ENCODE measurements at regions of chr14 and their contacts with region 1.

Region 1: DNA sequence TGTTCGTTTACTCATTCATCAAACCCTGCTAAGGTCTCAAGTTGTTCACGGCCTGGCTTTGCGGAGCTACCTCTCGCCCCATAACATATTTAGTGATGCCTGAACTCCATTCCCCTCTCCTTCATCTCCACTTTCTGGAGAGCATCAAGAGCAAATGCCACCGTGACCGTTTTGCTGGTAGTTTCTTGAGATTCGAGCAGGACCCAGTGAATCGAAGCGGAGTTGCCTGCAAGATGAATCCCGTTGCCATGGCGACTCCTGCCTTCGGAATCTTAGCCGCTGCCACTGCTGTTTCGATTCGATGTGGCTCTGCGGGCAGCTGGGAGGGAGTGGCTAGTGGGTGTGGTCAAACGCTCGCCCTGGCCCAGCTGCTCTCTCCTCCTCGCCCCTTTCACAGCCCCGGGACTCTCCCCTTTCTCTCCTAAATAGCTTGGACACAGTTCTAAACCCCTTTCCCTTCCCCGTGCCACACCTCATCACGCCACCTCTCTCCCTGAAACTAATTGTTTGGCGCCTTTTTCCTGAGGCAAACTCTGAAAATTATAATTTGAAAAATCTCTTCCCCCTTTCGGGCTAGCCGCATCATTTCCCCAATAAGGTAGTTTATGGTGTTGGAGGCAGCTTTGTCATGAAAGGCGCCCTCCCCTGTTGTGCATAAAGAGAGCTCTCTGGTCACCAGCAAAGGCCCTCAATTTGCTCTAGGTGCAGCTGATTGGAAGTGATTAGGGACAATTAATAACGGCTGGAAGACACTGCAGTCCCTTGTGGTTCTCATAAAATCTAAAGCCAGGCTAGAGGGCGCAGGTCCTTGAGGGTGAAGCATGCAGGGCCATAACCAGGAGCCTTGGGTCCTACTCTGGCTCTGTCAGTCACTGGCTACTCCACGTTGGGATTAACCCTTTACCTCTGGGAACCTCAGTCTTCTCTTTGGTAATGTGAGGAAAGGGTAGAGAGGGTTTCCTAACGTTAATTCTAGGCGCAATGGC is 1.6 kb downstream of the DAAM1 start:
- DNase-seq: peak; percentile 83 to 91 (median 85)
- ATAC-seq: peak in 3 of 4 donors; percentile 31 to 36 (median 31)
- H3K4me3 ChIP-seq: peak overlapping the region; percentile 70 to 95 (median 86)
- H3K27ac ChIP-seq: peak overlapping the region; percentile 87 to 97 (median 94)
- H3K4me1 ChIP-seq: peaks cover 0 to 58% (median 45%) of the 10 kb centered on the region in 12 donors
- H3K27me3 ChIP-seq: peaks cover 0 to 3% (median 0%) of the 10 kb centered on the region in 9 donors
- CTCF ChIP-seq: peak in 3 of 12 donors; percentile 7 to 33 (median 26)
- POLR2A ChIP-seq: no peak

Region 2: GRCh38 chr14:58659846-58660245 is 530.2 kb before region 1 on chr14:
- intact Hi-C with region 1: no loop called
- DNase-seq: peak; percentile 57 to 68 (median 64)
- ATAC-seq: peak in 3 of 4 donors; percentile 73 to 81 (median 77)
- H3K4me3 ChIP-seq: no peak overlapping the region
- H3K27ac ChIP-seq: peak overlapping the region in 4 of 12 donors; percentile 8 to 41 (median 30)
- H3K4me1 ChIP-seq: peaks cover 0 to 26% (median 4%) of the 10 kb centered on the region in 12 donors
- H3K27me3 ChIP-seq: no peaks in the 10 kb centered on the region
- CTCF ChIP-seq: no peak
- POLR2A ChIP-seq: no peak

Region 3: GRCh38 chr14:58749066-58749669 is 440.9 kb before region 1 on chr14:
- intact Hi-C with region 1: no loop called
- DNase-seq: no peak
- ATAC-seq: peak in 3 of 4 donors; percentile 38 to 49 (median 43)
- H3K4me3 ChIP-seq: no peak overlapping the region
- H3K27ac ChIP-seq: peak overlapping the region in 1 of 12 donors; percentile 69
- H3K4me1 ChIP-seq: peaks cover 0 to 70% (median 9%) of the 10 kb centered on the region in 12 donors
- H3K27me3 ChIP-seq: no peaks in the 10 kb centered on the region
- CTCF ChIP-seq: no peak
- POLR2A ChIP-seq: no peak

Region 4: DNA sequence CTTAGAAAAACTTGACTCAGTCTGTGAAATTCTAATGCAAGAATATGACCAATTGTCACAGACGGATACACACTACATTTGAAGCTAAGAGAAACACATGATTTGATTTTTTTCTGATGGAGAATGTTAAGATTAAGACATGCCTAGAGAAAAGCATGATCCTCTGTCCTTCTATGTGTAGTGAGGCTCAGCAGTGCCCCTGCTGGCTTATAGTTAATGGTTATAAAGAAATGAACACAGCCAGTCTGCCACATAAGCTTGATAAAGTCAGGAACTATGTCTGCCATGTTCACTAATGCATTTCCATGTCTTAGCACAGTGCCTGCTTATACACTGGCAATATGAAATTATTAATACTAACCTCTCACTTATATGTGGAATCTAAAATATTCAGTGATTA is 169.7 kb before region 1 on chr14:
- intact Hi-C with region 1: no loop called
- DNase-seq: no peak
- ATAC-seq: no peak
- H3K4me3 ChIP-seq: no peak overlapping the region
- H3K27ac ChIP-seq: no peak overlapping the region
- H3K4me1 ChIP-seq: no peaks in the 10 kb centered on the region
- H3K27me3 ChIP-seq: no peaks in the 10 kb centered on the region
- CTCF ChIP-seq: peak in 10 of 12 donors; percentile 9 to 49 (median 33)
- POLR2A ChIP-seq: no peak

Region 5: GRCh38 chr14:59215325-59216181 is 25.5 kb after region 1 on chr14:
- intact Hi-C with region 1: loop called in 2 of 10 experiments (anchors 1 to 2 kb)
- DNase-seq: peak; percentile 68 to 88 (median 79)
- ATAC-seq: peak; percentile 73 to 97 (median 92)
- H3K4me3 ChIP-seq: peak overlapping the region in 1 of 12 donors; percentile 5
- H3K27ac ChIP-seq: peak overlapping the region; percentile 29 to 78 (median 50)
- H3K4me1 ChIP-seq: peaks cover 26 to 100% (median 79%) of the 10 kb centered on the region in 12 donors
- H3K27me3 ChIP-seq: no peaks in the 10 kb centered on the region
- CTCF ChIP-seq: no peak
- POLR2A ChIP-seq: no peak

Region 6: GRCh38 chr14:59301354-59301753 is 111.3 kb after region 1 on chr14:
- intact Hi-C with region 1: loop called in 1 of 10 experiments (anchors 10 kb)
- DNase-seq: peak in 1 of 5 donors; percentile 43
- ATAC-seq: peak in 3 of 4 donors; percentile 42 to 62 (median 54)
- H3K4me3 ChIP-seq: no peak overlapping the region
- H3K27ac ChIP-seq: no peak overlapping the region
- H3K4me1 ChIP-seq: peaks cover 3 to 83% (median 47%) of the 10 kb centered on the region in 12 donors
- H3K27me3 ChIP-seq: no peaks in the 10 kb centered on the region
- CTCF ChIP-seq: no peak
- POLR2A ChIP-seq: no peak

Region 7: DNA sequence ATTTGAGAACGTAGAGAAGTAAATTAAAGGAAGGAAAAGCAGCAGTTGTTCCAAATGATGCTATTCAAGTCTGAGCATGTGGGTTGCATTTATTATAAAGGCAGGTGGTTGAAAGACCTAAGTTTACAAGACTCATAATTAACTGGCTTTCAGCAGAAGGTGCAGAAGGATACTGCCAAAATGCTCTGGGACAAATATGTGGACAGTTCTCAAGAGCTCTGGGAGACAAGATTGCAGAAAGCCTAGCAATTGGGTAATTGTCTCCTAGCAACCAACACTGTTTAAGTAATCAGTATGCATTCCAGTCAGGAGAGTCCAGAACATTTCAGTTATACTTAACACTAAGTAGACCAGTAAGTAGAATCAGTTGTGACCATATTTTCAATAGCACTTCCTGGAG is 143.6 kb after region 1 on chr14:
- intact Hi-C with region 1: loop called in 5 of 10 experiments (anchors 5 to 10 kb)
- DNase-seq: peak in 2 of 5 donors; percentile 39 to 56
- ATAC-seq: peak; percentile 91 to 93 (median 92)
- H3K4me3 ChIP-seq: peak overlapping the region in 4 of 12 donors; percentile 3 to 11 (median 4)
- H3K27ac ChIP-seq: peak overlapping the region; percentile 72 to 92 (median 82)
- H3K4me1 ChIP-seq: peaks cover 9 to 87% (median 68%) of the 10 kb centered on the region in 12 donors
- H3K27me3 ChIP-seq: no peaks in the 10 kb centered on the region
- CTCF ChIP-seq: no peak
- POLR2A ChIP-seq: no peak

Region 8: GRCh38 chr14:59354666-59355065 is 164.6 kb after region 1 on chr14:
- intact Hi-C with region 1: no loop called
- DNase-seq: no peak
- ATAC-seq: no peak
- H3K4me3 ChIP-seq: no peak overlapping the region
- H3K27ac ChIP-seq: peak overlapping the region in 11 of 12 donors; percentile 7 to 69 (median 46)
- H3K4me1 ChIP-seq: peaks cover 0 to 49% (median 27%) of the 10 kb centered on the region in 12 donors
- H3K27me3 ChIP-seq: no peaks in the 10 kb centered on the region
- CTCF ChIP-seq: no peak
- POLR2A ChIP-seq: no peak

Region 9: DNA sequence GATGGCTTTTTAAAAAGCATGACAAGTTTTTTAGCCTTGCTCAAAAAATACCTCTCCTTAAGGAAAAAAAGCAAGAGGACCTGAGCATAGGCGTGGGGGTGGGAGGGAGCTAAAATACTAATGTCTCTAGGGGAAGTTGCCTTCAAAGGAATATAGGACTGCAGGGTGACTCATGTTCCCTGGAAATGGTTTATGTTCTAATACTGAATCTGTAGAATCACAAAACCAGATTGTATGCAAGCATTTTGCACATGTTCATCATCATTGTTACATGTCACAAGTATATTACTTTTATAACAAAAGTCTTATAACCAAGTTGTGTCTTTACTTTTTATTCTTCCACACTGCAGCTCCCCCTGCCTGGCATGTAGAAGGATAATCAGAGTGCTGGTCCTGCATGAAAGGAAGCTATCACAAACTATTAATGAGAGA is 238.5 kb after region 1 on chr14:
- intact Hi-C with region 1: loop called in 8 of 10 experiments (anchors 2 to 10 kb)
- DNase-seq: no peak
- ATAC-seq: peak in 2 of 4 donors; percentile 17 to 27
- H3K4me3 ChIP-seq: no peak overlapping the region
- H3K27ac ChIP-seq: peak overlapping the region in 11 of 12 donors; percentile 44 to 79 (median 63)
- H3K4me1 ChIP-seq: peaks cover 0 to 64% (median 35%) of the 10 kb centered on the region in 12 donors
- H3K27me3 ChIP-seq: no peaks in the 10 kb centered on the region
- CTCF ChIP-seq: peak in 11 of 12 donors; percentile 11 to 64 (median 39)
- POLR2A ChIP-seq: no peak

Measured in heart left ventricle (tissue), 16 donors.